ENCODE measurements at regions of chr11 and their contacts with region 1.

Region 1: GRCh38 chr11:2885676-2886081 is at the start of gene CDKN1C:
- DNase-seq: peak; percentile 88 to 91
- ATAC-seq: peak; percentile 72 to 84 (median 80)
- H3K4me3 ChIP-seq: peak within 1 kb of the TSS; percentile 63 to 89 (median 78)
- H3K27ac ChIP-seq: peak within 1 kb of the TSS; percentile 80 to 94 (median 86)
- H3K4me1 ChIP-seq: peaks cover 5 to 55% (median 39%) of the 10 kb centered on the region in 9 donors
- H3K27me3 ChIP-seq: peaks cover 0 to 34% (median 0%) of the 10 kb centered on the region in 7 donors
- CTCF ChIP-seq: no peak
- total RNA-seq, gene CDKN1C: 16.9 to 48.0 (median 25.4) TPM

Region 2: DNA sequence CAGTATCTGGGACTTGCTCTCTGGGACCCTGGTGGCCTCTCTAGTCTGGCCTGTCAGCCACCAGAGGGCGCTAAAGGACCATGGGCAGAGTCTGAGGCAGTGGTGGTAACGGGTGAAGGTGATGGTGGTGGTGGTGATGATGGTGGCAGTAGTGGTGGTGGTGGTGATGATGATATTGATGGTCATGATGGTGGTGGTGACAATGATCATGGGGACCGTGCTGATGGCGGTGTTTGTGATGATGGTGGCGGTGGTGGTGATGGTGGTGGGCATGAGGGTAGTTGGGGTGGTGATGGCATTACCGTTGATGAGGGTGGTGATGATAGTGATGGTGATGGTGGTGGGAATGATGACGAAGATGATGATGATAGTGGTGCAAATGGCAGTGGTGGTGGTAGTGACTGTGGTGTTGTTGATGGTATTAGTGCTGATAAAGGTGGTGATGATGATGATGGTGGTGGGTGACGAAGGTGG is 457.3 kb before region 1 on chr11:
- intact Hi-C with region 1: loop called in 9 of 10 experiments (anchors 1 to 5 kb)
- DNase-seq: peak; percentile 78 to 79
- ATAC-seq: peak; percentile 74 to 90 (median 83)
- H3K4me3 ChIP-seq: no peak overlapping the region
- H3K27ac ChIP-seq: no peak overlapping the region
- H3K4me1 ChIP-seq: no peaks in the 10 kb centered on the region
- H3K27me3 ChIP-seq: peaks cover 0 to 5% (median 0%) of the 10 kb centered on the region in 7 donors
- CTCF ChIP-seq: peak; percentile 73 to 90 (median 86)

Region 3: DNA sequence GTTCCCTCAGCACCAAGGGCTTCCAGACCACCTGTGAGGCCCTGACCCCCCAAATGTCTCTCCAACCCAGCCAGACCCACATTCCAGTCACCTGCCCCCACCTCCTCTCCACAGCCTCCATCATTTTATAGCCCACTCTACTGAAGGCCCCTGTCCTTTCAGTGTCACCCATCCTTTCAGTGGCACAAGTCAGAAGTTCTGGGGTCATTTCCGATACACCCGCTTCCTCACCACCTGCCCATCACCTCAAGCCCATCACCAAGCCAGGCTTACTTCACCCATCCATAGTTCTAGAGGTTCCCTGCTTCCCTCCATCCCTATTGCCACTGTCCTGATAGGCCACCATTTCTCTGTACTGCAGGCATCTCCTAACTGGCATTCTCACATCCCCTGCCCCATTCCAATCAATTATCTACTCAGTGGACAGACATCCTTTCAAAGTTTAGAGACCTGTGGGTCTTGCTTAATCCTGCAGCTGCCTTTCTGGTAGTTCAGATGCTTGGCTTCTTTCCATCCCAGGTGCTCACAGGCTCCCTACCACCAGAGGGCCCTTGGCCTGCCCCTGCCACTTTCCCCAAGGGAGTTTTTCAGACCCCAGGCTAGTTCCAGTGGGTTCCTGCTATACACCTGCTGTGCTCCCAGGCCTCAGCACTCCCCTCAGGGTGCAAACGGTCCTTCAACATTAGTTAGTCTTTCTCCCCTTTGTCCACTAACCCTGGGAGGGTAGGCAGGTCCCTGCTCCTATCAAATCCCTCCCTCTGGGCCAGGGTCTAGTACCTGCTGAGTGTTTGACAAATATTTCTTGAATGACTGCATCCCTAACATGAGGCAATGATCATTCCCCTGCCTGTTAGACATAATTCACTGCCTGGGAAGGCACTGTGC is 193.4 kb before region 1 on chr11:
- intact Hi-C with region 1: loop called in 7 of 10 experiments (anchors 5 to 10 kb)
- DNase-seq: no peak
- ATAC-seq: no peak
- H3K4me3 ChIP-seq: no peak overlapping the region
- H3K27ac ChIP-seq: no peak overlapping the region
- H3K4me1 ChIP-seq: peaks cover 13 to 95% (median 60%) of the 10 kb centered on the region in 9 donors
- H3K27me3 ChIP-seq: no peaks in the 10 kb centered on the region
- CTCF ChIP-seq: peak in 1 of 9 donors; percentile 13

Region 4: GRCh38 chr11:2778630-2779498 is 106.8 kb before region 1 on chr11:
- intact Hi-C with region 1: loop called in 5 of 10 experiments (anchors 10 kb)
- DNase-seq: peak; percentile 76 to 85
- ATAC-seq: peak; percentile 86 to 93 (median 91)
- H3K4me3 ChIP-seq: peak overlapping the region in 6 of 10 donors; percentile 0 to 27 (median 17)
- H3K27ac ChIP-seq: peak overlapping the region; percentile 60 to 94 (median 80)
- H3K4me1 ChIP-seq: peaks cover 30 to 49% (median 43%) of the 10 kb centered on the region in 9 donors
- H3K27me3 ChIP-seq: no peaks in the 10 kb centered on the region
- CTCF ChIP-seq: peak in 6 of 9 donors; percentile 15 to 58 (median 43)

Region 5: DNA sequence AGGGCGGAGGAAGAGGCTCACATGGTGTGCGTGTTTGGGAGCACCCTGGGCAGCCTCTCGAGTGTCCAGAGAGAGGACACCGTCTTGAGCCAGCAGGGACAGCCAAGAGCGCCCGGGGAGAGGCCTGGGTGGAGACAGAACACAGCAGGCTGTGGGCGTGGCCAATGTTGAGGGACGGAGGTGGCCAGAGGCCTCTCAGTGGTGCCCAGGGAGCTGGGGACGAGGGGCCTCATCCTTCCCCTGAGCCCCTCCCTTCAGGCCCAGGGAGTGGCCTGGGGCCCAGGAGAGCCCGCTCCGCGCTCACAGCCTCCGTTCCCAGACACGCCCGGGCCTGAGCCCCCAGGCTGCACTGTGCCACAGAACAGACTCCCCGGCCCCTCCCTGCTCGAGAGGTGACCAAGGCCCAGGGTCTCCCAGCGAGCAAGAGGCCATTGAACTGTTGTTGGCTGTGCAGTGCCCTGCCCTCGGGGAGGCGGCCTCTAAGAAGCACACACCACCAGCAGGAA is 48.5 kb before region 1 on chr11:
- intact Hi-C with region 1: loop called in 1 of 10 experiments (anchors 5 kb)
- DNase-seq: peak; percentile 83 to 85
- ATAC-seq: peak; percentile 71 to 92 (median 84)
- H3K4me3 ChIP-seq: peak overlapping the region in 2 of 10 donors; percentile 1 to 14
- H3K27ac ChIP-seq: peak overlapping the region; percentile 24 to 79 (median 68)
- H3K4me1 ChIP-seq: peaks cover 14 to 57% (median 29%) of the 10 kb centered on the region in 9 donors
- H3K27me3 ChIP-seq: no peaks in the 10 kb centered on the region
- CTCF ChIP-seq: peak; percentile 28 to 59 (median 37)

Measured in heart right ventricle (tissue), 16 donors.